Mammary epithelial cell (primary cell): ENCODE measurements at regions of chr5 and their contacts with region 1.

Region 1: GRCh38 chr5:99032234-99033013 is 103.6 kb upstream of the CHD1 start:
- DNase-seq: peak; percentile 65
- H3K4me3 ChIP-seq: peak overlapping the region in 2 of 3 experiments; percentile 45 to 47
- H3K27ac ChIP-seq: no peak overlapping the region
- H3K4me1 ChIP-seq: peaks cover 9% of the 10 kb centered on the region
- H3K27me3 ChIP-seq: no peaks in the 10 kb centered on the region
- CTCF ChIP-seq: peak; percentile 75 to 84

Region 2: GRCh38 chr5:98905857-98906690 is 126.3 kb before region 1 on chr5:
- CTCF ChIA-PET with region 1: no interaction called
- dilution Hi-C with region 1: no loop called
- in situ Hi-C with region 1: loop called (anchors 5 kb)
- intact Hi-C with region 1: loop called (anchors 1 kb)
- DNase-seq: peak; percentile 32
- H3K4me3 ChIP-seq: no peak overlapping the region
- H3K27ac ChIP-seq: no peak overlapping the region
- H3K4me1 ChIP-seq: no peaks in the 10 kb centered on the region
- H3K27me3 ChIP-seq: no peaks in the 10 kb centered on the region
- CTCF ChIP-seq: peak; percentile 52 to 61

Region 3: GRCh38 chr5:98928873-98929696 is 103.3 kb before region 1 on chr5 and contains the start of gene CHD1:
- CTCF ChIA-PET with region 1: no interaction called
- dilution Hi-C with region 1: no loop called
- in situ Hi-C with region 1: no loop called
- intact Hi-C with region 1: loop called (anchors 1 kb)
- DNase-seq: peak; percentile 97
- H3K4me3 ChIP-seq: peak within 1 kb of the TSS; percentile 63 to 93 (median 80)
- H3K27ac ChIP-seq: peak within 1 kb of the TSS; percentile 93
- H3K4me1 ChIP-seq: peaks cover 13% of the 10 kb centered on the region
- H3K27me3 ChIP-seq: no peaks in the 10 kb centered on the region
- CTCF ChIP-seq: no peak
- total RNA-seq, gene CHD1: 34.9 to 39.8 TPM

Region 4: DNA sequence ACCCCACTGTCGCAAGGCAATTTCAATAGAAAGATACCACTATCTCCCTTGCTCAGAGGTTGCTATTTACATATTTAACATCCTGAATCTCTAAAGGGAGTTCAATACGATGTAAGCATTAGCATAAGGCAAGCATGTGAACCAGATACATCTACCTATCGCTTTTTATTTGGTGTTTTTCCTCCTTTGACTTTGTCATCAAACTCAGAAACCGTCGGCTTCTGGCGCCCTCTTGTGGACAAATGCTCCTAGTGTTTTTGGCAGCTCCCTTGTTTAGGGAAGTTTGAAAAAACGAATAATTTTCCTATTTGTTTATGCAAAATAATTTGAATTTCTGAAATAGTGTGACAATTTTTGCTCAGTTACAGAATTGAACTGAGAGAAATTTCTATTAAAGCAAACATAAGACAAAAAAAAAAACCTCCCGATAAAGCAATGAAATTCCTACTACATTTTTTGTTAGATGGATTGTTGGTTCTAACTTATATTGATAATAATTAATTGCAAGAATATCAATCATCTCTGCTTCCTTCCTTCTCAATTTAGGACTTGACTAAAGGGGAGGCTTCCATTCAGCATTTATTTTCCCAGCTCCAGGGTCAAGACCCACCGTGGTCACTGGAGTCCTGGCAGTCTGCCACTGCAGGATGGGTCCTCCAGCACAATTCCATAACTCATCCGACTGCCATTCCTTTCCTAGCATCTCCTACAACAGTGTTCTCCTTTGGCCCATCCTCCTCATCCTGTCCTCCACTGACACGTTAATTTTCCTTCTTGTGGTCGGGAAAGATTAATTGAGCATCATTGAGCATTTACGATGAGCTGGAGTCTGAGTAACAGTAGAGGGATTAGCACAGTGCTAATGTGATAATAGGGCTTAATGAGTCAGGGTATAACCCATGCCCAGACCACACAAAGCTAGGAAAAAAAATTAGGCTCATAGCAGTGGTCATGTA is 28.2 kb after region 1 on chr5:
- CTCF ChIA-PET with region 1: no interaction called
- dilution Hi-C with region 1: no loop called
- in situ Hi-C with region 1: no loop called
- intact Hi-C with region 1: loop called (anchors 1 kb)
- DNase-seq: peak; percentile 55
- H3K4me3 ChIP-seq: no peak overlapping the region
- H3K27ac ChIP-seq: peak overlapping the region; percentile 62
- H3K4me1 ChIP-seq: peaks cover 21% of the 10 kb centered on the region
- H3K27me3 ChIP-seq: no peaks in the 10 kb centered on the region
- CTCF ChIP-seq: peak; percentile 84 to 91